HEK293 (cell line): ENCODE measurements at regions of chr1 and their contacts with region 1.

Region 1: DNA sequence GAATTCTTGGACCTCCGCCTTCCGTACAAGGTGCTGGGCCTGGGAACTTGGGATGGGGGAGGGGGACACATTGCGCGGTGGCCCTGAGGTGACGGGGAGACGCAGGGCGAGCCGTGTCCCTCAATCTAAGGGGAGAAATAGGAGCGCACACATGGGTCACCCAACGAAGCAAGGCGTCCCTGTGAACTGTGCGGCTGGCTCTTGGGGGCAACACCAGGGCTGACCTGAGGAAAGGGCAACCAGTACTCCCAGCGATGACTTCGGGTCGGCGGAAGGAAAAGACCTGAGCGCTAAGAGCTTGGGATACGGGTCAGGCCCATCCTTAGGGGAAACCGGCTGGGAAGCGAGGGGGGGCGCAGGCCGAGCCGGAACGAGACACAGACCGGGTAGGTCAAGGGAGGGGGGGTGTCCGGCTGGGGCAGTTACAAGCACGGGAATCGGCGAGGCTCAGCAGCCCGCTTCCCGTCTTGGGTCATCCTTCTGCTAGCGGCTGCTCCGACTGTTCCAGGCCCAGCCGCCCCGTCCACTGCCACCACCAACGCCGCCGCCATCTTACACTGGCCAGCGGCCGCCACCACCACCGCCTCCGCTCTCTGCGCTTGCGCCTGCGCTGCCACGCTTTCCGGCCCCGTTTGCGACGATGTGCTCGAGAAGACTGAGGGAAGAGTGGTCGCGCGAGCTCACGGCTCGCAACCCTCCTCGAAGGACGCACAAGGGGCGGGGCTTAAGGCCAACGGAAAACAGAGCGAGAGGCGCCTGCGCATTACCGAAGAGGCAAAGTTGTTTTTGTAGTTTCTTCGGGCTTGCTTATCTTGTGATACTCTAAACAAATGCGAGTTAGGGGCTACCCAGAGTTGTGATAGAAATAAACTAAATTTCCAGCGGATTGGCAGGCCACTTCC is at the start of gene DCAF8:
- H3K4me3 ChIP-seq: peak within 1 kb of the TSS; percentile 94
- H3K27ac ChIP-seq: peak within 1 kb of the TSS; percentile 92
- H3K4me1 ChIP-seq: peaks cover 25% of the 10 kb centered on the region
- CTCF ChIP-seq: no peak; the same call in none of the 2 replicates

Region 2: DNA sequence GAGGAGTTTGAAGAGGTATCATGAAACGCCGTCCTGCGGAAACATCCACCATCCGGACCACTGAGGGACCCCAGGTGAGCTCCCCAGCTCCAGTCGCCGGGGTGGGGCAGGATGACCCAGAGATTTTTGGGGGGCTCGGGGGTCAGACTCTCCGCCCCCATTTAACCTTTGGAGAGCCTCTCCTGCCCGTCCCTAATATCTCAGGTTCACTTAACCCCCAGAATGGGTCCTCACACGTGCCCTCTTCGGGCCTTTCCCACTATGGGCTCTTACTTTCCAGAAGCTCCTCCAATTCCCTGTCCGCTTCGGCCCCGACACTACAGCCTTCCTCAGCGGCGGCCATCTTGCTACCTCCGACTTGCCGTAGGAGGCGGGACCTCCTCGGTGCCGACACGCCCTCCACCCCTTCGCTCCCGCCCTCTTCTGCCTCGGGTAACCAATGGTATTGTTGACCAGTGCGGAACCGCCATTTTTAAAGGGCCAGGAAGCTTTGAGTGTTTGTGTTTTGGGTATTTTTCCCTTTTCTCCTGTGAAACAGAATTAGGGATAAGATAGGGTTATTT is 22.7 kb after region 1 on chr1 and contains the start of gene PEX19:
- CTCF ChIA-PET with region 1: interaction called, 7 read pairs
- POLR2A ChIA-PET with region 1: interaction called, 10 read pairs
- H3K4me3 ChIP-seq: peak within 1 kb of the TSS; percentile 82
- H3K27ac ChIP-seq: peak within 1 kb of the TSS; percentile 30; the same call in 1 of the 2 replicates
- H3K4me1 ChIP-seq: no peaks in the 10 kb centered on the region
- CTCF ChIP-seq: no peak

Region 3: GRCh38 chr1:160307118-160307854 is 45.1 kb after region 1 on chr1:
- CTCF ChIA-PET with region 1: no interaction called
- POLR2A ChIA-PET with region 1: no interaction called
- H3K4me3 ChIP-seq: no peak overlapping the region
- H3K27ac ChIP-seq: no peak overlapping the region
- H3K4me1 ChIP-seq: no peaks in the 10 kb centered on the region
- CTCF ChIP-seq: no peak